Endothelial cell of umbilical vein (primary cell): ENCODE measurements at regions of chr7 and their contacts with region 1.

Region 1: GRCh38 chr7:130242198-130243014 is 24.3 kb upstream of the CPA2 start:
- DNase-seq: peak; percentile 50
- H3K4me3 ChIP-seq: no peak overlapping the region
- H3K27ac ChIP-seq: no peak overlapping the region
- H3K4me1 ChIP-seq: no peaks in the 10 kb centered on the region
- H3K27me3 ChIP-seq: peaks cover 0 to 2% of the 10 kb centered on the region in 2 experiments
- CTCF ChIP-seq: peak; percentile 80 to 92
- POLR2A ChIP-seq: no peak

Region 2: GRCh38 chr7:130486114-130486958 is 243.9 kb after region 1 on chr7:
- CTCF ChIA-PET with region 1: interaction called, 10 read pairs
- POLR2A ChIA-PET with region 1: no interaction called
- dilution Hi-C with region 1: no loop called
- intact Hi-C with region 1: loop called (anchors 1 kb)
- DNase-seq: peak; percentile 30
- H3K4me3 ChIP-seq: peak overlapping the region in 2 of 3 experiments; percentile 24 to 26
- H3K27ac ChIP-seq: no peak overlapping the region
- H3K4me1 ChIP-seq: peaks cover 34% of the 10 kb centered on the region
- H3K27me3 ChIP-seq: peaks cover 2 to 7% of the 10 kb centered on the region in 2 experiments
- CTCF ChIP-seq: peak; percentile 61 to 65
- POLR2A ChIP-seq: no peak

Region 3: GRCh38 chr7:130491841-130492522 is 249.6 kb after region 1 on chr7 and contains the start of gene MEST:
- CTCF ChIA-PET with region 1: interaction called, 10 read pairs
- POLR2A ChIA-PET with region 1: no interaction called
- dilution Hi-C with region 1: no loop called
- intact Hi-C with region 1: loop called (anchors 1 kb)
- DNase-seq: peak; percentile 21
- H3K4me3 ChIP-seq: peak within 1 kb of the TSS in 2 of 3 experiments; percentile 29 to 55
- H3K27ac ChIP-seq: no peak within 1 kb of the TSS
- H3K4me1 ChIP-seq: peaks cover 30% of the 10 kb centered on the region
- H3K27me3 ChIP-seq: no peaks in the 10 kb centered on the region
- CTCF ChIP-seq: no peak
- POLR2A ChIP-seq: peak; percentile 57
- total RNA-seq, gene MEST: 52.6 and 62.1 TPM in 2 replicates

Region 4: GRCh38 chr7:130560970-130561369 is 318.6 kb after region 1 on chr7:
- CTCF ChIA-PET with region 1: interaction called, 4 read pairs
- POLR2A ChIA-PET with region 1: no interaction called
- dilution Hi-C with region 1: no loop called
- intact Hi-C with region 1: loop called (anchors 1 kb)
- DNase-seq: peak; percentile 48
- H3K4me3 ChIP-seq: no peak overlapping the region
- H3K27ac ChIP-seq: no peak overlapping the region
- H3K4me1 ChIP-seq: no peaks in the 10 kb centered on the region
- H3K27me3 ChIP-seq: no peaks in the 10 kb centered on the region
- CTCF ChIP-seq: no peak
- POLR2A ChIP-seq: no peak

Region 5: GRCh38 chr7:130695840-130696239 is 453.4 kb after region 1 on chr7:
- CTCF ChIA-PET with region 1: no interaction called
- POLR2A ChIA-PET with region 1: no interaction called
- dilution Hi-C with region 1: no loop called
- intact Hi-C with region 1: loop called (anchors 1 kb)
- DNase-seq: peak; percentile 41
- H3K4me3 ChIP-seq: no peak overlapping the region
- H3K27ac ChIP-seq: no peak overlapping the region
- H3K4me1 ChIP-seq: no peaks in the 10 kb centered on the region
- H3K27me3 ChIP-seq: peaks cover 0 to 7% of the 10 kb centered on the region in 2 experiments
- CTCF ChIP-seq: peak; percentile 36 to 52
- POLR2A ChIP-seq: no peak

Region 6: DNA sequence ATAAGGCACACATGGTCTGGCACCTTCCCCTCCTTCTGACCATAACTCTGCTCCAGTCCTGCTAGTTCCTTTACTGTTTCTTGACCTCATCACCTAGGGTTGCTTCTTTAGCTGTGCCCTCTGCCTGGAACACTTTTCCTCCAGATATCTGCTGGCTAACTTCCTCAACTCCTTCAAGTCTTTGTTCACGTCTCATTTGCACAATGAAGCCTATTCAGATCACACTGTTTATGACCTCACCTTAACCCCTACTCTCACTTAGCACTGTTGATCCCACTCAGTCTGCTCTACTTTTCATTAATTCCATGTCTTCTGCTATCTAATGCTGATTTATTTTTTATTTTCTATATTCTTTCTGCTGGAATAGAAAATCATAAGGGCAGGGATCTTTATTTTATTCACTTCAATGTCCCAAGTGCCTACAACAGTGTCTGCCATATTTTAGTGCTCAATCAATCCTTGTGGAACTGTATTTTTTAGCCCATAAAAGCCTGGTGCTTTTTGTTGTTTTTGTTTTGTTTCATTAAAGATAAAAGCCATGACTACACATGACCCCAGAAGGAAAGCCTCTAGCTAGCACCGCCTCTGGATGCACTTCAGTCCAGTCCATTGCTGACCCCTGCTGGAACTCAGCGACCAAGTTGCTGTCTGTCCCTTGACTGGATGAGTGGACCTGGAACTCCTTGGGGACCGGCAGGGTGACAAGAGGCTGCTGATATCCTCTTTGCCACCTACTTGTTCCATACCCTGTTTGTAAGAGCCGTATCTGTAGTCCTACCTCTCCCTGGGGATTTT is 479.3 kb after region 1 on chr7:
- CTCF ChIA-PET with region 1: interaction called, 17 read pairs
- POLR2A ChIA-PET with region 1: no interaction called
- dilution Hi-C with region 1: no loop called
- intact Hi-C with region 1: loop called (anchors 1 kb)
- DNase-seq: peak; percentile 71
- H3K4me3 ChIP-seq: no peak overlapping the region
- H3K27ac ChIP-seq: no peak overlapping the region
- H3K4me1 ChIP-seq: no peaks in the 10 kb centered on the region
- H3K27me3 ChIP-seq: peaks cover 21 to 28% of the 10 kb centered on the region in 2 experiments
- CTCF ChIP-seq: peak; percentile 55 to 67
- POLR2A ChIP-seq: no peak